HepG2 (cell line): ENCODE measurements at regions of chr10 and their contacts with region 1.

Region 1: DNA sequence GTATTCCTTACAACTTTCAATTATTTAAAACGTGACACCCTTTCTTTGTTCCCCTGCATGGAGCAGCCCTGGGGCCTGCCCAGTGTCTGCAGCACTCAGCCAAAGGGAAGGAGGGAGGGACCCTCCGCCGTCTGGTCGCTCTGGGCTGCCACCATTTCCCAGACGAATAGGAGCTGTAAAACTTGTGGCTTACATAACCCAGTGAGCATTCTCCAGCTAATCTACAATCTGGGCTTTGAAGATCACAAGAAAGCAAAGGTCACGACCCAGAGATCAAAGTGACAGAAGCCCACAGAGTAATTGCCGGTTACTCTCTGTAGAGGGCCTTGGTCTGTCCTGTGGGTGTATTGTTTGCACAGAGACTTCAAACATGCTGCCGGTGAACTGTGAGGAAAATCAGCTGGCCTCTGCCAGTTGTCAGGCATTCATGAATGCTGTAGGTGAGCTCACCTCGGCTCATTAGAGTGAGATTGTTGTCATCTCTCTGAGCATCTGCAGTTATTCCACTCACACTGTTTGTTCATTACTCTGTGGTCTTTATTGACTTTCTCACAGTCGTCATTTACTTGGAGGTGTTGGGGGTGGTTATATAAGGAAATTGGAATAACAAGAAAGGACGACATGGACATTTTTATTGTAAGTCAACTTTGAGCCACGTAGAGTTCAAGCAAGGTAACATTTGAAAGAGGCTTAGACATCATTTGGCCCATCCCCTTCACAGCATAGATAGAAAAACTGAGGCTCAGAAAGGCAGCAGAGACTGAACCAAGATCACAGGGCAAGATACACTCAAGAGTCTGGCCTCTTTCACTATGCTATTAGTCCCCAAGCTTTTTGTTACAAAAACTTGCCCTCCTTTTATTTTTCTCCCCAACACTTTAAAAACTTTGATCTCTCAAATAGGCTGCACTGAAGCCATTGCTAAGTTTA is 619.8 kb downstream of the LRMDA start:
- DNase-seq: peak; percentile 100
- ATAC-seq: peak; percentile 97
- H3K4me3 ChIP-seq: peak overlapping the region in 1 of 3 experiments; percentile 24; a peak in 1 of 6 replicates
- H3K27ac ChIP-seq: peak overlapping the region; percentile 93
- H3K4me1 ChIP-seq: peaks cover 70% of the 10 kb centered on the region
- H3K27me3 ChIP-seq: no peaks in the 10 kb centered on the region
- CTCF ChIP-seq: peak; percentile 37; the same call in 1 of the 2 replicates
- EP300 ChIP-seq: peak; percentile 99
- POLR2A ChIP-seq: peak; percentile 44 to 59
- RAD21 ChIP-seq: no peak

Region 2: GRCh38 chr10:75772153-75772887 is 279.0 kb before region 1 on chr10:
- CTCF ChIA-PET with region 1: no interaction called
- POLR2A ChIA-PET with region 1: interaction called, 21 read pairs
- in situ Hi-C with region 1: no loop called
- intact Hi-C with region 1: no loop called
- DNase-seq: no peak
- ATAC-seq: no peak
- H3K4me3 ChIP-seq: no peak overlapping the region
- H3K27ac ChIP-seq: peak overlapping the region; percentile 13
- H3K4me1 ChIP-seq: peaks cover 69% of the 10 kb centered on the region
- H3K27me3 ChIP-seq: no peaks in the 10 kb centered on the region
- CTCF ChIP-seq: no peak
- EP300 ChIP-seq: no peak
- POLR2A ChIP-seq: no peak
- RAD21 ChIP-seq: no peak

Region 3: DNA sequence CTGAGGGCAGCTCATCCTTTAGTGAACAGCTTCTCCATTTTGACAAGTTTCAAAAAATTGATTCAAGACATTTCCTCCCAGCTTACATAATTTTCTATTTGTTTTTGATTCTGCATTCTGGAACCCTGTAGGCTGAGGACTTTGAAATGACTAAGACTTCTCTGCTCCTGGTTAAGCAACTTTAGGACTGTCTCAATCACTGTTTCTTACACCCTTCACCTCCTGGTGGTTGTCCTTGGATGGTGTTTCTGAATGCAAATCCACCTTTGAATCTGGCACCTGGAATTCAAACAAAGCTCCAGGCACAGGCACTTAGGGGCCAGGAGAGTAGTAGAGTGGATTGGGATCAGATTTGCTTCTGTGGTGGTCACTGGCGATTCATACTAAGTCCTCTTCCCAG is 24.4 kb before region 1 on chr10:
- CTCF ChIA-PET with region 1: no interaction called
- POLR2A ChIA-PET with region 1: interaction called, 145 read pairs
- in situ Hi-C with region 1: no loop called
- intact Hi-C with region 1: loop called (anchors 2 kb)
- DNase-seq: no peak
- ATAC-seq: no peak
- H3K4me3 ChIP-seq: no peak overlapping the region
- H3K27ac ChIP-seq: peak overlapping the region; percentile 92
- H3K4me1 ChIP-seq: peaks cover 97% of the 10 kb centered on the region
- H3K27me3 ChIP-seq: no peaks in the 10 kb centered on the region
- CTCF ChIP-seq: peak; percentile 26; the same call in 1 of the 2 replicates
- EP300 ChIP-seq: no peak; a peak in 1 of 4 replicates
- POLR2A ChIP-seq: peak in 1 of 2 experiments; percentile 5; a peak in 1 of 4 replicates
- RAD21 ChIP-seq: no peak

Region 4: GRCh38 chr10:76071653-76072365 is 20.5 kb after region 1 on chr10:
- CTCF ChIA-PET with region 1: no interaction called
- POLR2A ChIA-PET with region 1: no interaction called
- in situ Hi-C with region 1: no loop called
- intact Hi-C with region 1: no loop called
- DNase-seq: no peak
- ATAC-seq: no peak
- H3K4me3 ChIP-seq: no peak overlapping the region
- H3K27ac ChIP-seq: no peak overlapping the region
- H3K4me1 ChIP-seq: no peaks in the 10 kb centered on the region
- H3K27me3 ChIP-seq: no peaks in the 10 kb centered on the region
- CTCF ChIP-seq: no peak
- EP300 ChIP-seq: no peak
- POLR2A ChIP-seq: no peak
- RAD21 ChIP-seq: no peak

Region 5: GRCh38 chr10:76086761-76087639 is 35.7 kb after region 1 on chr10:
- CTCF ChIA-PET with region 1: no interaction called
- POLR2A ChIA-PET with region 1: interaction called, 11 read pairs
- in situ Hi-C with region 1: no loop called
- intact Hi-C with region 1: loop called (anchors 5 kb)
- DNase-seq: peak; percentile 60
- ATAC-seq: peak; percentile 99
- H3K4me3 ChIP-seq: no peak overlapping the region
- H3K27ac ChIP-seq: no peak overlapping the region
- H3K4me1 ChIP-seq: peaks cover 52% of the 10 kb centered on the region
- H3K27me3 ChIP-seq: no peaks in the 10 kb centered on the region
- CTCF ChIP-seq: peak; percentile 90
- EP300 ChIP-seq: no peak
- POLR2A ChIP-seq: no peak
- RAD21 ChIP-seq: peak; percentile 92

Region 6: DNA sequence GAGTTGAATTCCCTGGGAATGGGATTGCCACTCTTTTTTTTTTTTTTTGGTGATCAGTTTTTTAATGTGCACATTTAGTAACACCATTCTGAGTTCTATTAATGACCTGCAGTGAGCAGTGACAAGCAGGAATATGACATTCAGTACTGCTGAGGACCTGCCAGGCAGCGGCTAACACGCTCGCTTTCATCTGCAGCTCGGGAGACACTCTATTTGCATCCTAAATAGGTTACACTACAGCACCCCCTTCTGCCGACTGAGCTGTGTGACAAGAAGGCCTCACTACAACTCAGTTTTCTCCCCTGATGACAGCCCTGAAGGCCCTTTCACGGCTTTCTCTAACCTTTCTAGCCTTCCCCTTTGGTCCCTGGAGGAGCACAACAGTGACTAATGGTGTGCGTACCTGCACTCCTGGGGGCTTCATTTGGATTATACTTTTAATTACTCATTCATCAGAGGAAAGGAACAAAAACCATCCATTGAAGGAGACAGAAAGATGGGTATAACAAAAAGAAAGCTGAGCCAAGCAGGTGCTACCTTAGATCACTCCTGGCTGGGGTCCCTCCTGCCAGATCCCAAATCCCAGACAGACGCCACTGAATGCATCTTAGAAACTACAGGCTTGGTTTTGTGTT is 252.5 kb after region 1 on chr10:
- CTCF ChIA-PET with region 1: no interaction called
- POLR2A ChIA-PET with region 1: interaction called, 13 read pairs
- in situ Hi-C with region 1: no loop called
- intact Hi-C with region 1: loop called (anchors 2 kb)
- DNase-seq: peak; percentile 81
- ATAC-seq: peak; percentile 99
- H3K4me3 ChIP-seq: no peak overlapping the region
- H3K27ac ChIP-seq: no peak overlapping the region
- H3K4me1 ChIP-seq: peaks cover 47% of the 10 kb centered on the region
- H3K27me3 ChIP-seq: no peaks in the 10 kb centered on the region
- CTCF ChIP-seq: peak; percentile 89
- EP300 ChIP-seq: no peak
- POLR2A ChIP-seq: no peak
- RAD21 ChIP-seq: peak; percentile 80